ENCODE measurements at regions of chr14 and their contacts with region 1.

Region 1: GRCh38 chr14:22570132-22570949 is 18.7 kb downstream of the DAD1 start:
- DNase-seq: peak; percentile 78 to 79
- H3K4me3 ChIP-seq: peak overlapping the region in 1 of 4 experiments; percentile 26; a peak in 1 of 8 replicates
- H3K27ac ChIP-seq: peak overlapping the region; percentile 66
- H3K4me1 ChIP-seq: peaks cover 0 to 5% (median 1%) of the 10 kb centered on the region in 4 experiments; a peak in 3 of 7 replicates
- H3K27me3 ChIP-seq: no peaks in the 10 kb centered on the region
- CTCF ChIP-seq: peak; percentile 63 to 100 (median 97)
- EP300 ChIP-seq: peak in 1 of 2 experiments; percentile 73; a peak in 1 of 3 replicates
- POLR2A ChIP-seq: no peak
- RAD21 ChIP-seq: peak; percentile 83 to 89

Region 2: DNA sequence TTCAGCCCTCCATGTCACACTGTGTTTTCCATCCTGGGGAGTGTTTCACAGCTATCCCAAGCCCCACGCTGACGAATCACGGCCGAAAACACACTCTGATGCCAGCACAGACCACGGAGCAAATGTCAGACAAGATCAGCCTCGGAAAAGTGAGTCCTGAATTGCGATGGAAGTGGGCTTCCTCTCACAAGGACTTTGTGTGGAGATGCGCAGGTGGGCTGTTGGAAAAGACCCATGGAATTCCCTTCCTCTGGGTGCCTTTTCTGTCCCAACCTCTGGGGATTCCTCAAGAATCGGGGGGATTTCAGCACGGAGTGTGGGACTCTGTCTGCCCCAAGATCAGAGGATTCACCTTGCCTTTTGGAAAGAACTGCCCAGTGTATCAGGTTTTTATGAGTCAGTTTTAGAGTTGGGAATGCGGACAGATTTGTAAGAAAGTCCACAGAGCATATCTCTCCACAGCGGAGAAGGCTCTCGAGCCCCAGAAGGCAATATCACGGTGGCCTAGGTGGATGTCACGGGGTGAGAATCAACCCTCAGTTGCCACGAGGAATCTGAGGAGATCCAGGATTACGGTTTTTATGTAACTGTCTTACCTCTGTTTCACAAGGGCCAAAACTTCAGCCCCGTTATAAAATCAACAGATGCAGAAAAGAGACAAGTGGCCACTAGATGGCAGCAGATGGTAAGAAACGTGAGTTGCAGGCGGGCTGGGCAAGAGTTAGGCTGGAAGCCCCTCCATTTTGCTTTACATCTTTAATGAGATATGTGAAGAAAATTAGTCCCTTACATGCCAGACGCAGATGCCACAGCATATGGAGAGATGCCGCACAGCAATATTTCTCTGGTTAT is 183.2 kb before region 1 on chr14:
- CTCF ChIA-PET with region 1: interaction called, 44 read pairs
- POLR2A ChIA-PET with region 1: no interaction called
- DNase-seq: peak; percentile 9 to 80
- H3K4me3 ChIP-seq: no peak overlapping the region
- H3K27ac ChIP-seq: no peak overlapping the region
- H3K4me1 ChIP-seq: no peaks in the 10 kb centered on the region
- H3K27me3 ChIP-seq: no peaks in the 10 kb centered on the region
- CTCF ChIP-seq: peak; percentile 38 to 88 (median 78)
- EP300 ChIP-seq: no peak
- POLR2A ChIP-seq: no peak
- RAD21 ChIP-seq: peak; percentile 92 to 95

Region 3: GRCh38 chr14:22521449-22522239 is 48.7 kb before region 1 on chr14:
- CTCF ChIA-PET with region 1: no interaction called
- POLR2A ChIA-PET with region 1: no interaction called
- DNase-seq: no peak
- H3K4me3 ChIP-seq: no peak overlapping the region
- H3K27ac ChIP-seq: no peak overlapping the region
- H3K4me1 ChIP-seq: no peaks in the 10 kb centered on the region; a peak in 1 of 7 replicates
- H3K27me3 ChIP-seq: no peaks in the 10 kb centered on the region; a peak in 1 of 7 replicates
- CTCF ChIP-seq: no peak
- EP300 ChIP-seq: no peak
- POLR2A ChIP-seq: no peak
- RAD21 ChIP-seq: no peak

Region 4: GRCh38 chr14:22531451-22532344 is 38.6 kb before region 1 on chr14:
- CTCF ChIA-PET with region 1: interaction called, 11 read pairs
- POLR2A ChIA-PET with region 1: no interaction called
- DNase-seq: no peak
- H3K4me3 ChIP-seq: no peak overlapping the region
- H3K27ac ChIP-seq: no peak overlapping the region
- H3K4me1 ChIP-seq: no peaks in the 10 kb centered on the region; a peak in 1 of 7 replicates
- H3K27me3 ChIP-seq: no peaks in the 10 kb centered on the region
- CTCF ChIP-seq: no peak
- EP300 ChIP-seq: no peak
- POLR2A ChIP-seq: no peak
- RAD21 ChIP-seq: no peak

Region 5: DNA sequence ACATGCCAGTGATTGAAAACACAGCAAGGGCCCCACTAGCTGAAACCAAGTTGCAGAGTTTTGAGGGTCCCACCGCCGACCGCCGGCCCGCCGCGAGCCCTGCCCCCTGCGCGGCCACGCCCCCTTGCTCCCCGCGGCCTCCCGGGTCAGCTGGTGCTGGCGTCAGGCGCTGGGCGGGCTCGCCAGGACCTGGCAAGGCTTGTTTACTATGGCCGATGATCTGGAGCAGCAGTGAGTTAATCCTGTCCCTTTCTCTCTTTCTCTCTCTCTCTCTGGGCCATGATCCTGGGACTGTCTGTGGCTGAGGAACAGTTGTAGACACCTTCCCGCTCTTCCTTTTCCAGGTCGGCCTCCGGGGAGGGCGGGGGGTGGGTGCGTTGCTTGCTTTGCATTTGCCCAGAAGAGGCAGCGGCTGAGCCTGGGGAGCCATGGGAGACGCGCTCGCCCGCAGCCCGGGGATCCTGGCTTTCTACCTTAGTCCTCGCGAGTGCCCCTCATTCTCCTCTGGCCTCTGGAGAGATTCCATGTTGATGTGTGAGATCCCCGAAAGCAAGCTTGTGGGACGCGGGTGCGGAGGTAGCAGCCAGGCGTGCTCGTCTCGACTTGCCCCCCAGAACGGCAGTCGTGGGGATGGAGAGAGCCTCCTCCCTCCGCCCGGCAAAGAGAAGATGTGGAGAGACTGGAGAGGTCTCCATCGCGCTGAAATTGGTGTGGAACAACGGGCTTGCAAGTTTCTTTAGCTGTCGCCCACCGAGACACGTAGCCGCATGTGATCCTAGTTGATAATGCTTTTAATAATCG is 28.0 kb after region 1 on chr14 and contains the start of gene ABHD4:
- CTCF ChIA-PET with region 1: interaction called, 27 read pairs
- POLR2A ChIA-PET with region 1: interaction called, 4 read pairs
- DNase-seq: peak in 1 of 2 experiments; percentile 92
- H3K4me3 ChIP-seq: peak within 1 kb of the TSS; percentile 68 to 99 (median 84)
- H3K27ac ChIP-seq: peak within 1 kb of the TSS; percentile 77
- H3K4me1 ChIP-seq: peaks cover 0 to 10% (median 6%) of the 10 kb centered on the region in 4 experiments; a peak in 4 of 7 replicates
- H3K27me3 ChIP-seq: no peaks in the 10 kb centered on the region
- CTCF ChIP-seq: no peak
- EP300 ChIP-seq: 0 out of 3 replicates have a peak, but pooled peaks of 1 of the 2 experiments have one; percentile 31
- POLR2A ChIP-seq: peak; percentile 60 to 78; a peak in 2 of 3 replicates
- RAD21 ChIP-seq: no peak
- total RNA-seq, gene ABHD4: 32.4 and 37.1 TPM in 2 replicates

Region 6: GRCh38 chr14:22766456-22767322 is 196.3 kb after region 1 on chr14 and contains the start of gene OXA1L:
- CTCF ChIA-PET with region 1: interaction called, 21 read pairs
- POLR2A ChIA-PET with region 1: interaction called, 11 read pairs
- DNase-seq: peak; percentile 78 to 90
- H3K4me3 ChIP-seq: peak within 1 kb of the TSS; percentile 87 to 97 (median 94)
- H3K27ac ChIP-seq: peak within 1 kb of the TSS; percentile 91
- H3K4me1 ChIP-seq: peaks cover 0 to 2% (median 0%) of the 10 kb centered on the region in 4 experiments; a peak in 2 of 7 replicates
- H3K27me3 ChIP-seq: no peaks in the 10 kb centered on the region
- CTCF ChIP-seq: no peak
- EP300 ChIP-seq: 0 out of 3 replicates have a peak, but pooled peaks of 1 of the 2 experiments have one; percentile 13
- POLR2A ChIP-seq: peak; percentile 50 to 81; a peak in 2 of 3 replicates
- RAD21 ChIP-seq: no peak
- total RNA-seq, gene OXA1L: 125 and 129 TPM in 2 replicates

Region 7: DNA sequence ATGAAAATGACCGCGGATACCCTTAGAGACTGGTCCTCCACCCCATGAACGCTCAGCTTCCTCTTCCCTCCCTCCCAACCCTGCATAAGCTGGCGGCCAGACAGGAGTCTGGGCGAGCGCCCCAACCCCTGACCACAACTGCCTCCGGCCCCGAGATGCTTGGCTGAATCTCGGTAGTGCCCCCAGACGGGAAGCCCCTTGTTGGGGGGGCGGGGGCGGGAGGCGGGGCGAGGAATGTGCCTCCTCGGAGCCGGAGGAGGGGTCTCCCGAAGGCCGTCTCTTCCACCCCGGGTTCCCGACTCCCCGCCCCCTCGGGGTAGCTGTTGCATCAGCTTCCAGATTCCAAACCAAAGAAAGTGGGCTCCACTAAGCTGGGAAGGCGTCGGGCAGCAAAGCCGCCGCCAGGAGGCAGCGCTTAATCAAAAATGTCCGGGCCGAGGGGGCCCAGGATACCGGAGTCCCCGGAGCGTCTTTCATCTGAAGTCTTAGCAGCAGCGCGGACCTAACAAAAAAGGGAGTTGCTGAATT is 252.3 kb after region 1 on chr14:
- CTCF ChIA-PET with region 1: interaction called, 19 read pairs
- POLR2A ChIA-PET with region 1: interaction called, 10 read pairs
- DNase-seq: peak; percentile 92 to 95
- H3K4me3 ChIP-seq: peak overlapping the region; percentile 57 to 94 (median 76)
- H3K27ac ChIP-seq: peak overlapping the region; percentile 95
- H3K4me1 ChIP-seq: peaks cover 16 to 26% (median 20%) of the 10 kb centered on the region in 4 experiments
- H3K27me3 ChIP-seq: no peaks in the 10 kb centered on the region
- CTCF ChIP-seq: peak; percentile 76 to 97 (median 79)
- EP300 ChIP-seq: peak in 1 of 2 experiments; percentile 87; a peak in 1 of 3 replicates
- POLR2A ChIP-seq: peak in 1 of 2 experiments; percentile 53; a peak in 2 of 3 replicates
- RAD21 ChIP-seq: peak; percentile 94 to 97

Region 8: DNA sequence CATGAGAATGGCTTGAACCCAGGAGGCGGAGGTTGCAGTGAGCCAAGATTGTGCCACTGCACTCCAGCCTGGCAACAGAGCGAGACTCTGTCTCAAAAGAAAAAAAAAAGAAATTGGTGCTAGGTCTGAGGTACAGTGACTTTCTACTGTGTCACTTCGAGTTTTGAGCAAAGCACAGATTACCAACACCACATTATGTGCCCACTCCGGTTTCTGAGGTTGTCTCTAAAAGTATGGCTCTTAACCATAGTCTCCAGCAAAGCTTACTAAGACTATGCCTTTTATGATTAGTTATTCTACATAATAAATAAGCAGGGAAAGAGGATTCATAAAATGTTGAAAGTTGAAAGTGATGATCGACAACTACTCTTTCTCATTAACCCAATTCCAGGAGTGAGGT is 340.6 kb after region 1 on chr14:
- CTCF ChIA-PET with region 1: no interaction called
- POLR2A ChIA-PET with region 1: no interaction called
- DNase-seq: no peak
- H3K4me3 ChIP-seq: no peak overlapping the region
- H3K27ac ChIP-seq: no peak overlapping the region
- H3K4me1 ChIP-seq: no peaks in the 10 kb centered on the region
- H3K27me3 ChIP-seq: no peaks in the 10 kb centered on the region
- CTCF ChIP-seq: no peak
- EP300 ChIP-seq: no peak
- POLR2A ChIP-seq: no peak
- RAD21 ChIP-seq: no peak

Region 9: DNA sequence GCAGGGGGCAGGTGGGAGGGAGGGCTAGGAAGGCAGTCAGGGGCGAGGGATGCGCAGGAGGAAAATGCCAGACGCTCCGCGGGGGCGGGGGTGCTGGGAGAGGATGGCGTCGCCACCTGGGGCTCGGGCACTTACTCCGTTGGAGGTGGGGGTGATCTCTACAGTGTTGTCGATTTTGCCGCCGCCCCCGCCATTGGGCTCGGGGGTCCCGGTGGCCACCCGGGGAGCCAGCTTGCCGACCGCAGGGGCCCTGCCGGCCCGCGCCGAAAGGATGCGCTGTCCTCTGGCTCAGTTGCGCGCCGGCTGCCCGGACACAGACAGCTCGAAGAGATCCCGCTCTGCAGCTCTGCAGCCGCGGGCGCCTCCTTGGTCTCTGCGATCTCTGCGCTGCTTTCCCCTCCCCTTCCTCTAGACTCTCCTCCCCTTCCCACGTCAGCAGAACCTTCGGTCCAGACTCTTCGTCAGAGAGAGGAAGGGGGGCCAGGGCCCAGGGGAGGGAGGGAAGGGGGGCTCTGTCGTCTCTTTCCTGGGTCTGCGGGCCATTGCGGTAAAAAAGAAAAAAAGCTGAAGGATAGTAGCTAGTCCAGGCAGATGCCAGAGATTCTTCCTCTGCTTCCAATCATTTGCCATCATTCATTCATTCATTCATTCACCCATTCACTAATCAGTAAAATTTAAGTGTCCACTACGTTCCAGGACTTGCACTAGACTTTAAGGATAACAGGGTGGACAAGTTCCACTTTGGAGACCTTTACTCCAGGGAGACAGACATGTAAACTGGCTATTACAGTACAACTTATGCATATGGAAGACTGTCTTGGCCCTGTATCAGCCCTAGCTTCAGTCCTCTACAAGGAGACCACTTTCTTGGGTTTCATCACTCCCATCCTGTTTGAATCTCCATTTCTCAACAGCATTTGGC is 782.4 kb after region 1 on chr14 and contains the start of gene SLC22A17:
- CTCF ChIA-PET with region 1: no interaction called
- POLR2A ChIA-PET with region 1: no interaction called
- DNase-seq: peak in 1 of 2 experiments; percentile 86
- H3K4me3 ChIP-seq: peak within 1 kb of the TSS; percentile 37 to 84 (median 73)
- H3K27ac ChIP-seq: 0 out of 2 replicates have a peak within 1 kb of the TSS, but pooled peaks have one; percentile 8
- H3K4me1 ChIP-seq: peaks cover 0 to 3% (median 2%) of the 10 kb centered on the region in 4 experiments; a peak in 4 of 7 replicates
- H3K27me3 ChIP-seq: peaks cover 0 to 14% (median 10%) of the 10 kb centered on the region in 4 experiments; a peak in 6 of 7 replicates
- CTCF ChIP-seq: peak in 2 of 3 experiments; percentile 11 to 22; a peak in 2 of 4 replicates
- EP300 ChIP-seq: no peak
- POLR2A ChIP-seq: peak; percentile 36 to 91
- RAD21 ChIP-seq: peak in 1 of 2 experiments; percentile 16; a peak in 1 of 4 replicates
- total RNA-seq, gene SLC22A17: 39.4 and 43.0 TPM in 2 replicates

Measured in H1 (cell line).